ENCODE measurements at regions of chr2 and their contacts with region 1.

Region 1: DNA sequence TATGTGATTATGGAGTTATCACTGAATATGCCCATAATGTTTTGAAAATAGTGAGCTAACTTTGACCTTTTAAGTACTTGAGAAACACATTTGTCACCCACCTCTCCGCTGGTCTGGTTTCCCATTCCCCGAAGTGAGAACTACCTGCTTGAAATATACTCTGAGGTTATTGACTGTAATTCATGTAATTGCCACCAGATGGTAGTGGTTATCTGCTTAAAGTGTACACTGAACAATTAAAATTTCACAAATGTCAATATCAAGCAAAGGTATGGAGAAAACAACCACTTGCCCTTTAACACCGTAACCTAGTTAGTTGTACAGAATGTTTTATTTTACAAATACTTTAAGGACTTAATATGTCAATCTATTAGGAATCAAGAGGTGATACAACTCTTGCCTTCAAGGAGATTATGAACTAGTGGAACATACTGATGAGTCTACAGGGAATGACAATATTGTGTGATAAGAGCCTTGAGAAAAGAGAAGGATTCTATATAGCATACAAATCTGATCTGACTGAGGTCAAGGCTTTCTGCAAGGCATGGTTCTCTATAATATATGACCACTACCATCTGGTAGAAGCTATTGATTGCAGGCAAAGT is 316.8 kb upstream of the KCNH7 start:
- DNase-seq: no peak
- ATAC-seq: no peak
- H3K4me3 ChIP-seq: no peak overlapping the region
- H3K27ac ChIP-seq: no peak overlapping the region
- H3K4me1 ChIP-seq: no peaks in the 10 kb centered on the region
- H3K27me3 ChIP-seq: no peaks in the 10 kb centered on the region
- CTCF ChIP-seq: peak; percentile 67; the same call in 1 of the 2 replicates

Region 2: GRCh38 chr2:163302141-163302540 is 146.8 kb after region 1 on chr2:
- CTCF ChIA-PET with region 1: no interaction called
- POLR2A ChIA-PET with region 1: no interaction called
- in situ Hi-C with region 1: no loop called
- intact Hi-C with region 1: no loop called
- DNase-seq: no peak
- ATAC-seq: no peak
- H3K4me3 ChIP-seq: no peak overlapping the region
- H3K27ac ChIP-seq: no peak overlapping the region
- H3K4me1 ChIP-seq: no peaks in the 10 kb centered on the region
- H3K27me3 ChIP-seq: no peaks in the 10 kb centered on the region
- CTCF ChIP-seq: no peak

Region 3: DNA sequence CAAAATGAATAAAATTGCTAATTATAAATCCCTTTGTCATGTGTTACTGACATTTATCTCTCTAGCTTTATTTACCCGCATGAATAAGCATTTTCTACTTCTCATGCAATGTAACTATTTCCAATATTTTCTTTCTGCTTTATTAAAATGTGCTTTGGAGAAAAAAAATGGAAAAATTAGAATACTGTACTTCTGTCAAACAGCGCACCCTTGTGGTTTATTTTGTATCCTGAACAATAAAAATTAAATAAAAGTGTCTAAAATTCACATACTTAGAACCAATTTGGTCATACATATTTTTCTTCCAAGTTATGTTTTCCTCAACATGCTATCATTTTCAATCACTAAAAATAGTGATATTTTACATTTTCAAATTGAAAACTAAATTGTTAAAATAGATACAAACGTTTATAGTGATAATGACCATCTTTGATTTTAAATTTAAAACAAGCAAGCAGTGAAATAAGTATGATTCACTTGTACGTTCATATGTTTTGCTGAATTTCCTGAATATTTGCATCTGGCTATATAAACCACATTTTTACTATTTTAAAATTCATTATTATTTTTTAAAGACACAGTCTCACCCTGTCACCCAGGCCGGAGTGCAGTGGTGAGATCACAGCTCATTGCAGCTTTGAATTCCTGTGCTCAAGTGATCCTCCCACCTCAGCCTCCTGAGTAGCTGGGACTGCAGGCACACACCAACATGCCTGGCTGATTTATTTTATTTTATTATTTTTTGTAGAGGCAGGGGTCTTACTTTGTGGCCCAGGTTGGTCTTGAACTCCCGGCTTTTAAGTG is 1561.8 kb after region 1 on chr2:
- CTCF ChIA-PET with region 1: no interaction called
- POLR2A ChIA-PET with region 1: no interaction called
- in situ Hi-C with region 1: no loop called
- intact Hi-C with region 1: loop called (anchors 5 kb)
- DNase-seq: no peak
- ATAC-seq: no peak
- H3K4me3 ChIP-seq: no peak overlapping the region
- H3K27ac ChIP-seq: no peak overlapping the region
- H3K4me1 ChIP-seq: no peaks in the 10 kb centered on the region
- H3K27me3 ChIP-seq: no peaks in the 10 kb centered on the region
- CTCF ChIP-seq: peak; percentile 57; the same call in 1 of the 2 replicates

Measured in Panc1 (cell line).